CD8-positive, alpha-beta T cell (primary cell): ENCODE measurements at regions of chr6 and their contacts with region 1.

Region 1: GRCh38 chr6:141335477-141336273 is 797.0 kb upstream of the GJE1 start:
- DNase-seq: no peak
- ATAC-seq: no peak
- H3K4me3 ChIP-seq: no peak overlapping the region
- H3K4me3 Mint-ChIP-seq: no peak overlapping the region
- H3K27ac ChIP-seq: no peak overlapping the region
- H3K27ac Mint-ChIP-seq: no peak overlapping the region
- H3K4me1 ChIP-seq: no peaks in the 10 kb centered on the region
- H3K4me1 Mint-ChIP-seq: no peaks in the 10 kb centered on the region
- H3K27me3 ChIP-seq: peaks cover 0 to 3% of the 10 kb centered on the region in 2 experiments
- H3K27me3 Mint-ChIP-seq: peaks cover 6% of the 10 kb centered on the region
- CTCF ChIP-seq: no peak

Region 2: GRCh38 chr6:141351721-141352120 is 16.0 kb after region 1 on chr6:
- CTCF ChIA-PET with region 1: no interaction called
- POLR2A ChIA-PET with region 1: no interaction called
- intact Hi-C with region 1: loop called in 1 of 2 experiments (anchors 2 kb)
- DNase-seq: no peak
- ATAC-seq: no peak
- H3K4me3 ChIP-seq: no peak overlapping the region
- H3K4me3 Mint-ChIP-seq: no peak overlapping the region
- H3K27ac ChIP-seq: no peak overlapping the region
- H3K27ac Mint-ChIP-seq: no peak overlapping the region
- H3K4me1 ChIP-seq: no peaks in the 10 kb centered on the region
- H3K4me1 Mint-ChIP-seq: no peaks in the 10 kb centered on the region
- H3K27me3 ChIP-seq: no peaks in the 10 kb centered on the region
- H3K27me3 Mint-ChIP-seq: peaks cover 1% of the 10 kb centered on the region
- CTCF ChIP-seq: no peak

Region 3: GRCh38 chr6:141443659-141444289 is 108.1 kb after region 1 on chr6:
- CTCF ChIA-PET with region 1: no interaction called
- POLR2A ChIA-PET with region 1: no interaction called
- intact Hi-C with region 1: no loop called
- DNase-seq: no peak
- ATAC-seq: no peak
- H3K4me3 ChIP-seq: no peak overlapping the region
- H3K4me3 Mint-ChIP-seq: no peak overlapping the region
- H3K27ac ChIP-seq: no peak overlapping the region
- H3K27ac Mint-ChIP-seq: no peak overlapping the region
- H3K4me1 ChIP-seq: no peaks in the 10 kb centered on the region
- H3K4me1 Mint-ChIP-seq: no peaks in the 10 kb centered on the region
- H3K27me3 ChIP-seq: no peaks in the 10 kb centered on the region
- H3K27me3 Mint-ChIP-seq: no peaks in the 10 kb centered on the region
- CTCF ChIP-seq: no peak

Region 4: DNA sequence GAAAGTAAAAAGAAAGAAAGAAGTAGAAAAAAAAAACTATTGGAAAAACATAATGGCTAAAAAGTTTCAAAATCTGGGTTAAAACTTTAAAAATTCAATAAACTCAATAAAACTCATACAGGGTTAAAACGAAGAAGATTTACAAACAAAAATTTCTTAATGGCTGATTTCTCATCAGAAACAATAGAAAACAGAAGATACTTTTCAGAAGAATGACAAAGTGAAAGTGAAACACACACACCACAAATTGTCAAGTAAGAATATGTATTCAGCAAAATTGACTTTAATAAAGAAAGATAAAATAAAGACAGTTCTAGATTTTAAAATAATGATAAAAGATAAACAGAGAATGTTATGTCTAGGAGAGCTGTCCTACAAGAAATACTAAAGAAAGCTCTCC is 178.2 kb after region 1 on chr6:
- CTCF ChIA-PET with region 1: no interaction called
- POLR2A ChIA-PET with region 1: no interaction called
- intact Hi-C with region 1: no loop called
- DNase-seq: peak in 1 of 9 experiments; percentile 22
- ATAC-seq: no peak
- H3K4me3 ChIP-seq: no peak overlapping the region
- H3K4me3 Mint-ChIP-seq: no peak overlapping the region
- H3K27ac ChIP-seq: no peak overlapping the region
- H3K27ac Mint-ChIP-seq: no peak overlapping the region
- H3K4me1 ChIP-seq: no peaks in the 10 kb centered on the region
- H3K4me1 Mint-ChIP-seq: peaks cover 9% of the 10 kb centered on the region
- H3K27me3 ChIP-seq: no peaks in the 10 kb centered on the region
- H3K27me3 Mint-ChIP-seq: no peaks in the 10 kb centered on the region
- CTCF ChIP-seq: no peak